Activated CD4-positive, alpha-beta T cell treated with anti-CD3 and anti-CD28 coated beads for 36 hours (primary cell): ENCODE measurements at regions of chr17 and their contacts with region 1.

Region 1: GRCh38 chr17:61238455-61238933 is 161.1 kb upstream of the TBX2 start:
- DNase-seq: no peak
- ATAC-seq: no peak
- H3K4me3 Mint-ChIP-seq: no peak overlapping the region
- H3K27ac Mint-ChIP-seq: no peak overlapping the region
- H3K4me1 Mint-ChIP-seq: peaks cover 22% of the 10 kb centered on the region
- H3K27me3 Mint-ChIP-seq: no peaks in the 10 kb centered on the region

Region 2: DNA sequence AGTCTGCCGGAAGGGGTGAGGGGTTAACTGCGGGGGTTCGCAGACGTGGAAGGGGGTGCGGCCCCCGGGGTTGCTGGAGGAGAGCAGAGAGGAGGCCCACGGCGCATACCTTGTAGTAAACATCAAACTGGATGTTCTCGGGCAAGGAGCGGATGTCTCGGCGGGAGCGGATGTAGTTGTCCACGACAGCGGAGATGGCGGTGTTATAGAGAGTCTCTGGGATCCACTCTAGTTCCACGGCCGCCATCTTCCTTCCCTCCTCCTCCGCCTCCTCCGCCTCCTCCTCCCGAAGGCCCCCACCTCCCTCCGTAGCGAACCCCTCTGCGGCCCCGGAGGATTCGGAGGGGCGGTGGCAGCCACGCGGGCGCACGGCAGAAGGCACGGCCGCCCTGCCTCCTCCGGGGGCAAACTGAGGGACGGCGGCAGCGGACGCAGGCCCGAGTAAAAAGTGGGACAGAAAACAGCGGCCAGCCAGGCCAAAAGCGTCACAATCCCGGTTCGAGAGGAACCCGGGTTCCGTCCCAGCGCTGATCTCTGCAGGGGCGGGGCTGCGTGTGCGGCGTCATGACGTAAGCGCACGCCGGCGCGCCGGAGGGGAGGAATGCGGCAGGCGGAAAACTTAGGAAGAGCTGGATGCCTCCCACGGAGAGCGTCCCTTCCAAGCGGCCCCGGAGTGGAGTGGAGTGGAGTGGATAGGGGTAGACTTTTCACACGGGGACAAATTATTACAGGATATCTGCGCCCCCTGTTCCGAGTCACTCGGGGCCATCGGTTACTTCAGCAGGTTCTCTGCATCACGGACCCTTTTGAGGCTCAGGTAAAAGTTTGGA is 712.6 kb before region 1 on chr17 and contains the start of gene APPBP2:
- CTCF ChIA-PET with region 1: no interaction called
- POLR2A ChIA-PET with region 1: no interaction called
- intact Hi-C with region 1: no loop called
- DNase-seq: peak; percentile 80
- ATAC-seq: peak; percentile 82
- H3K4me3 Mint-ChIP-seq: peak within 1 kb of the TSS; percentile 96
- H3K27ac Mint-ChIP-seq: peak within 1 kb of the TSS; percentile 97
- H3K4me1 Mint-ChIP-seq: peaks cover 30% of the 10 kb centered on the region
- H3K27me3 Mint-ChIP-seq: no peaks in the 10 kb centered on the region
- total RNA-seq, gene APPBP2: 21.4 to 28.8 TPM

Region 3: GRCh38 chr17:61196302-61196704 is 42.2 kb before region 1 on chr17:
- CTCF ChIA-PET with region 1: no interaction called
- POLR2A ChIA-PET with region 1: no interaction called
- intact Hi-C with region 1: no loop called
- DNase-seq: no peak
- ATAC-seq: no peak
- H3K4me3 Mint-ChIP-seq: no peak overlapping the region
- H3K27ac Mint-ChIP-seq: no peak overlapping the region
- H3K4me1 Mint-ChIP-seq: no peaks in the 10 kb centered on the region
- H3K27me3 Mint-ChIP-seq: no peaks in the 10 kb centered on the region

Region 4: GRCh38 chr17:61221597-61222460 is 16.7 kb before region 1 on chr17:
- CTCF ChIA-PET with region 1: interaction called, 4 read pairs
- POLR2A ChIA-PET with region 1: no interaction called
- intact Hi-C with region 1: loop called in 1 of 2 experiments (anchors 2 kb)
- DNase-seq: peak; percentile 44
- ATAC-seq: peak; percentile 55
- H3K4me3 Mint-ChIP-seq: peak overlapping the region; percentile 61
- H3K27ac Mint-ChIP-seq: peak overlapping the region; percentile 91
- H3K4me1 Mint-ChIP-seq: peaks cover 45% of the 10 kb centered on the region
- H3K27me3 Mint-ChIP-seq: no peaks in the 10 kb centered on the region